CD8-positive, alpha-beta T cell (primary cell): ENCODE measurements at regions of chr5 and their contacts with region 1.

Region 1: DNA sequence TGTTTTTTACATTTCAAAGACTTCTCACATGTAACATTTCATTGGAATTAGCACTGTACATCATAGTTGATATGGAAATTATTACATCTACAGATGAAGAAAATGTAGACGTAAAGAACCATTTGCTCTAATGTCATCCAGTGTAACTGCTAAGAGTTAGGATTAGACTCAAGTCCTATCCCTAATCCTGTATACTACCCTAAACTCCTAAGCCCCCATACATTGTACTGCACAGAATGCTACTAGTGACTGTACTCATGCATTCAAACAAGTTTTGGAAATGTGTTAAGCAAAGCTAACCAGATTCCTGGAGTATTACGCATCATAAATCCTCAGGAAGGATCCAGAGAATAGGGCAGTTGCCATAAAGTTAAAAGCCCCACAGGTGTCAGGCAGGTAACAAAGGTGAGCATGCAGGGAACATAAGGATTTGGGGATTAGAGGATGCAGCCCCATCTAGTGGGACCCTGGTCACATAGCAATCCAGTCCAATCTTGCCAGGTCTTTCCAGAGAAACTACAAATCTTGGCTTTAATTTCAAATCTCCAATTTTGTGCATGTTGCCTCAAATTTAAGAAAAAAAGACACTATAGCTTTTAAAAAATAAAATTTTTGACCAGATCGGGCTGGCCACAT is 32.0 kb downstream of the HAVCR1 start:
- DNase-seq: peak in 2 of 9 experiments; percentile 17 to 46
- ATAC-seq: no peak
- H3K4me3 ChIP-seq: no peak overlapping the region
- H3K4me3 Mint-ChIP-seq: no peak overlapping the region
- H3K27ac ChIP-seq: no peak overlapping the region
- H3K27ac Mint-ChIP-seq: peak overlapping the region; percentile 18
- H3K4me1 ChIP-seq: peaks cover 35% of the 10 kb centered on the region
- H3K4me1 Mint-ChIP-seq: peaks cover 54% of the 10 kb centered on the region
- H3K27me3 ChIP-seq: no peaks in the 10 kb centered on the region
- H3K27me3 Mint-ChIP-seq: no peaks in the 10 kb centered on the region
- CTCF ChIP-seq: peak; percentile 28

Region 2: DNA sequence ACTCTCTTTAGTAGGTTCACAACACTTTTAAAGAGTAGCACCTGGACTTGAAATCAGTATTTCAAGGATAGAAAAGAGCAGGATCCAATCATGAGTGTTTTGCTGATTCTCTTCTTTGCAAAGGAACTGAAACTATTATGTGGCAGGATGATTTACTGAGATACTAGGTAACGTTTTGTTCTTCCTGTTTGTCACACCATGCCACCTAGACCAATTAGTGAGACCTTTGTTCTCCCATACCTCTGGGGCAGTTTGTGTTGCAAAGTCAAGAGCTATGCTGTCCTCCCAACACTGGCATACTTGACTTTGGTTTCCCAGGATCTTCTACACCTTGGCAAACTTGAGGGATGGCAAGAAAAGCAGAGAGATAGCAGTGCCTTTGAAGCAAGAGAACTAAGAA is 133.4 kb before region 1 on chr5:
- CTCF ChIA-PET with region 1: no interaction called
- POLR2A ChIA-PET with region 1: no interaction called
- intact Hi-C with region 1: loop called in 1 of 2 experiments (anchors 5 kb)
- DNase-seq: no peak
- ATAC-seq: no peak
- H3K4me3 ChIP-seq: no peak overlapping the region
- H3K4me3 Mint-ChIP-seq: no peak overlapping the region
- H3K27ac ChIP-seq: no peak overlapping the region
- H3K27ac Mint-ChIP-seq: peak overlapping the region; percentile 58
- H3K4me1 ChIP-seq: peaks cover 18% of the 10 kb centered on the region
- H3K4me1 Mint-ChIP-seq: peaks cover 24% of the 10 kb centered on the region
- H3K27me3 ChIP-seq: peaks cover 0 to 3% of the 10 kb centered on the region in 2 experiments
- H3K27me3 Mint-ChIP-seq: no peaks in the 10 kb centered on the region
- CTCF ChIP-seq: no peak

Region 3: GRCh38 chr5:158180407-158180806 is 1153.5 kb after region 1 on chr5:
- CTCF ChIA-PET with region 1: no interaction called
- POLR2A ChIA-PET with region 1: no interaction called
- intact Hi-C with region 1: no loop called
- DNase-seq: no peak
- ATAC-seq: no peak
- H3K4me3 ChIP-seq: no peak overlapping the region
- H3K4me3 Mint-ChIP-seq: no peak overlapping the region
- H3K27ac ChIP-seq: no peak overlapping the region
- H3K27ac Mint-ChIP-seq: no peak overlapping the region
- H3K4me1 ChIP-seq: no peaks in the 10 kb centered on the region
- H3K4me1 Mint-ChIP-seq: no peaks in the 10 kb centered on the region
- H3K27me3 ChIP-seq: no peaks in the 10 kb centered on the region
- H3K27me3 Mint-ChIP-seq: no peaks in the 10 kb centered on the region
- CTCF ChIP-seq: no peak